ENCODE measurements at regions of chr6 and their contacts with region 1.

Region 1: GRCh38 chr6:14144678-14145113 is 27.1 kb downstream of the CD83 start:
- DNase-seq: peak; percentile 43 to 81 (median 75)
- ATAC-seq: peak; percentile 95
- H3K4me3 ChIP-seq: no peak overlapping the region
- H3K4me3 Mint-ChIP-seq: no peak overlapping the region
- H3K27ac ChIP-seq: no peak overlapping the region
- H3K27ac Mint-ChIP-seq: no peak overlapping the region
- H3K4me1 ChIP-seq: peaks cover 4% of the 10 kb centered on the region
- H3K4me1 Mint-ChIP-seq: no peaks in the 10 kb centered on the region
- H3K27me3 ChIP-seq: no peaks in the 10 kb centered on the region
- H3K27me3 Mint-ChIP-seq: no peaks in the 10 kb centered on the region
- CTCF ChIP-seq: peak; percentile 95

Region 2: GRCh38 chr6:13873285-13874190 is 271.2 kb before region 1 on chr6:
- CTCF ChIA-PET with region 1: interaction called, 11 read pairs
- POLR2A ChIA-PET with region 1: no interaction called
- intact Hi-C with region 1: loop called (anchors 1 kb)
- DNase-seq: peak; percentile 47 to 84 (median 77)
- ATAC-seq: peak; percentile 93
- H3K4me3 ChIP-seq: peak overlapping the region; percentile 40 to 44
- H3K4me3 Mint-ChIP-seq: peak overlapping the region; percentile 83
- H3K27ac ChIP-seq: no peak overlapping the region
- H3K27ac Mint-ChIP-seq: no peak overlapping the region
- H3K4me1 ChIP-seq: peaks cover 7% of the 10 kb centered on the region
- H3K4me1 Mint-ChIP-seq: peaks cover 15% of the 10 kb centered on the region
- H3K27me3 ChIP-seq: no peaks in the 10 kb centered on the region
- H3K27me3 Mint-ChIP-seq: peaks cover under 1% of the 10 kb centered on the region
- CTCF ChIP-seq: peak; percentile 67

Region 3: DNA sequence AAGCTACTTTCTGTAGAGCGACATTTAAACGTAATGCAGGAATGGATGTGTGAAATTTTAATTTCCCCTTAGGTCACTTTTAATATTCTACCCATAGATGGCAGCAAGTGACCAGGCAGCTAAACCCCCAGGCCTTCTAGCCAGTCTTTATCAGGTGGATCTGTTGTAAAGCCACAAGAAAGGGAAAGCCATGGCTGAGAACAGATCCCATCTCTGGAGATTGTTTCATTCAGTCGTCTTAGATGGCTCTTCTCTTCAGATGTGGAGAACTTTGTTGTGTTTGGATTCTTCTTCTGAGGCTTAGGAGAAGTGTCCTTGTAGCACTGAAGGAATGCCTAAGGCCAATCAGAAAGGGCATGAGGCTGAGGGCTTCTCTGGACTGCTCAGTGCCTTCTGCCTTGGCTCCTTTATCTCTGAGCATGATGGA is 235.7 kb before region 1 on chr6:
- CTCF ChIA-PET with region 1: interaction called, 20 read pairs
- POLR2A ChIA-PET with region 1: no interaction called
- intact Hi-C with region 1: loop called in 1 of 2 experiments (anchors 1 kb)
- DNase-seq: peak in 7 of 9 experiments; percentile 6 to 75 (median 32)
- ATAC-seq: peak; percentile 62
- H3K4me3 ChIP-seq: no peak overlapping the region
- H3K4me3 Mint-ChIP-seq: no peak overlapping the region
- H3K27ac ChIP-seq: no peak overlapping the region
- H3K27ac Mint-ChIP-seq: no peak overlapping the region
- H3K4me1 ChIP-seq: no peaks in the 10 kb centered on the region
- H3K4me1 Mint-ChIP-seq: no peaks in the 10 kb centered on the region
- H3K27me3 ChIP-seq: no peaks in the 10 kb centered on the region
- H3K27me3 Mint-ChIP-seq: peaks cover 24% of the 10 kb centered on the region
- CTCF ChIP-seq: peak; percentile 45

Region 4: DNA sequence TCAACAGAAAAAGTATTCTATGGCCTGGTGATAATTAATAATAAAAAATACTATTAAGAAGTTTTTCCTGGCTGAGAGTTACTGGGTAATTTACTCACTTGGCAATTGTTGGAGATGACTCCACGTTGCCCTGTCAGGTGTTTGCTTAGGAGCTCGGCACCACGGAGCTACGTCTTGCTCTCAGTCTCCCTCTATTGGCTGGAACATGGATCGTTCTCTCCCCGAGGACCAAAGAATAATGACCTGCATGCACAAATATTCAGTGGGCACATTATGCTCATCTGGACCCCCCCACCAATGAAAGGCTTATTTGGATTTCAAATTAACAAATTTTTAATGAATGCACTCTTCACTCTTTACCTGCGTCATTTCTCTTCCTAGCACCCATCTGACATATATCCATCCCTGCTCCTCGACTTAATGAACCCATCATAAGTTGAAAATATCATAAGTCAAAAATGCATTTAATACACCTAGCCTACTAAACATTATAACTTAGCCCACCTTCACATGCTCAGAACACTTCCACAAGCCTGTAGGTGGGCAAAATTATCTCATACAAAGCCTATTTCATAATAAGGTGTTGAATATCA is 98.1 kb before region 1 on chr6:
- CTCF ChIA-PET with region 1: interaction called, 7 read pairs
- POLR2A ChIA-PET with region 1: no interaction called
- intact Hi-C with region 1: loop called in 1 of 2 experiments (anchors 1 kb)
- DNase-seq: peak in 7 of 9 experiments; percentile 9 to 68 (median 33)
- ATAC-seq: peak; percentile 83
- H3K4me3 ChIP-seq: no peak overlapping the region
- H3K4me3 Mint-ChIP-seq: no peak overlapping the region
- H3K27ac ChIP-seq: no peak overlapping the region
- H3K27ac Mint-ChIP-seq: no peak overlapping the region
- H3K4me1 ChIP-seq: no peaks in the 10 kb centered on the region
- H3K4me1 Mint-ChIP-seq: peaks cover 1% of the 10 kb centered on the region
- H3K27me3 ChIP-seq: no peaks in the 10 kb centered on the region
- H3K27me3 Mint-ChIP-seq: peaks cover 31% of the 10 kb centered on the region
- CTCF ChIP-seq: peak; percentile 60

Region 5: DNA sequence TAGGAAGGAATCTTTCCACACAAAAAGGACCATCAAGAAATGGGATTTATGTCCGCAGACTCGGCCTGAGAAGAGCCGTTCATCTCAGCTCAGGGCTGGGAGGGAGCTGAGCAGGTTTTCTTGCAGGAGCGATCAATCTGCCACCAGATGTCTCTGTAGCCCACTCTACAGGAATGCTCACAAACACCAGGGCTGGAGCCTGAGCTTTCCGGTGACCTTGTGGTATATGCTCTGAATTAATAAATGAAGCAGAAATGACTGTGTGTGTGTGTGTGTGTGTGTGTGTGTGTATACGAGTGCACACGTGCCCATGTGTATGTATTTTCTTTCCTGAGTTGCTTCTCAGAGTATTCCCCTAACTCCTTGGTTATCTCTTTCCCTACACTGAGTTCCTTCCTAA is 15.1 kb before region 1 on chr6:
- CTCF ChIA-PET with region 1: interaction called, 26 read pairs
- POLR2A ChIA-PET with region 1: no interaction called
- intact Hi-C with region 1: loop called in 1 of 2 experiments (anchors 1 kb)
- DNase-seq: peak in 7 of 9 experiments; percentile 11 to 66 (median 38)
- ATAC-seq: peak; percentile 55
- H3K4me3 ChIP-seq: no peak overlapping the region
- H3K4me3 Mint-ChIP-seq: no peak overlapping the region
- H3K27ac ChIP-seq: no peak overlapping the region
- H3K27ac Mint-ChIP-seq: no peak overlapping the region
- H3K4me1 ChIP-seq: no peaks in the 10 kb centered on the region
- H3K4me1 Mint-ChIP-seq: peaks cover 11% of the 10 kb centered on the region
- H3K27me3 ChIP-seq: no peaks in the 10 kb centered on the region
- H3K27me3 Mint-ChIP-seq: no peaks in the 10 kb centered on the region
- CTCF ChIP-seq: no peak

Region 6: DNA sequence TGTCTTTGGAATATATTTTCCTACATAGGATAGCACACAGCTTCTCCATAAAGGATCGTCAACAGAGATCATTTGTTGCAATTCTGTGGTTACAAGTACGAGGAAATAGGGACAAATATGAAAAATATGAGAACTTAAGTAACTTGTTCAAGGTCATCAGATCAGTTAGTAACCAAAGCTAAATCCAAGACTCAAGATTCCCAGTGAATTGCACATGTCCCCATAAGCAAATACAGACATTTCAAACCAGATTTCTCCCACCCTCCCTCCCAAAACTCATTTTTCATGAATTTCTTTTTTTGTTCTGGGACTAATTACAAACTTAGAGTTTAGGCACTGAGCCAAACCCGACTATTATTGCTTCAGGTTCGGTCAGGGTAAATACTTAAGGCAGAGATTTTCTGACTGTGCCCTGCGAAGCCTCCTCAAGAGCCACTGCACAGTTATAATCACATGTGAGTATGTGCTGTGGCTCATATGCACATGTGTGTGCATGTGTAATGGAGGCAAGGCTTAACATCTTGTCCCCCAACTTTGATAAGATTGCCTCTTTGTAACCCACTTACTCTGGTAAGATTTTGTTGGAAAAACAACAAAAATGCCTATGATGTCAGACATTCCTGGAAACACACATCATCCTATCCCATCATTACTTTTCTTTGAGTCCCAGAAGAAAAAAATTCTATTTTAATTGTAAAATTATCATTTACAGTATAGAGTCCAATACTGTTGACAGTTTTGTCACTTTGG is 189.0 kb after region 1 on chr6:
- CTCF ChIA-PET with region 1: no interaction called
- POLR2A ChIA-PET with region 1: no interaction called
- intact Hi-C with region 1: no loop called
- DNase-seq: no peak
- ATAC-seq: no peak
- H3K4me3 ChIP-seq: no peak overlapping the region
- H3K4me3 Mint-ChIP-seq: no peak overlapping the region
- H3K27ac ChIP-seq: no peak overlapping the region
- H3K27ac Mint-ChIP-seq: no peak overlapping the region
- H3K4me1 ChIP-seq: no peaks in the 10 kb centered on the region
- H3K4me1 Mint-ChIP-seq: peaks cover 2% of the 10 kb centered on the region
- H3K27me3 ChIP-seq: no peaks in the 10 kb centered on the region
- H3K27me3 Mint-ChIP-seq: no peaks in the 10 kb centered on the region
- CTCF ChIP-seq: no peak

Region 7: GRCh38 chr6:14423330-14423729 is 278.6 kb after region 1 on chr6:
- CTCF ChIA-PET with region 1: no interaction called
- POLR2A ChIA-PET with region 1: no interaction called
- intact Hi-C with region 1: no loop called
- DNase-seq: no peak
- ATAC-seq: no peak
- H3K4me3 ChIP-seq: no peak overlapping the region
- H3K4me3 Mint-ChIP-seq: no peak overlapping the region
- H3K27ac ChIP-seq: no peak overlapping the region
- H3K27ac Mint-ChIP-seq: no peak overlapping the region
- H3K4me1 ChIP-seq: no peaks in the 10 kb centered on the region
- H3K4me1 Mint-ChIP-seq: no peaks in the 10 kb centered on the region
- H3K27me3 ChIP-seq: no peaks in the 10 kb centered on the region
- H3K27me3 Mint-ChIP-seq: peaks cover 5% of the 10 kb centered on the region
- CTCF ChIP-seq: no peak